Vagina (tissue), 2 donors: ENCODE measurements at regions of chr17 and their contacts with region 1.

Region 1: GRCh38 chr17:69460963-69461922 is 46.7 kb downstream of the MAP2K6 start:
- DNase-seq: no peak
- H3K4me3 ChIP-seq: no peak overlapping the region
- H3K27ac ChIP-seq: no peak overlapping the region
- H3K4me1 ChIP-seq: no peaks in the 10 kb centered on the region
- H3K27me3 ChIP-seq: no peaks in the 10 kb centered on the region
- CTCF ChIP-seq: no peak
- POLR2A ChIP-seq: no peak

Region 2: DNA sequence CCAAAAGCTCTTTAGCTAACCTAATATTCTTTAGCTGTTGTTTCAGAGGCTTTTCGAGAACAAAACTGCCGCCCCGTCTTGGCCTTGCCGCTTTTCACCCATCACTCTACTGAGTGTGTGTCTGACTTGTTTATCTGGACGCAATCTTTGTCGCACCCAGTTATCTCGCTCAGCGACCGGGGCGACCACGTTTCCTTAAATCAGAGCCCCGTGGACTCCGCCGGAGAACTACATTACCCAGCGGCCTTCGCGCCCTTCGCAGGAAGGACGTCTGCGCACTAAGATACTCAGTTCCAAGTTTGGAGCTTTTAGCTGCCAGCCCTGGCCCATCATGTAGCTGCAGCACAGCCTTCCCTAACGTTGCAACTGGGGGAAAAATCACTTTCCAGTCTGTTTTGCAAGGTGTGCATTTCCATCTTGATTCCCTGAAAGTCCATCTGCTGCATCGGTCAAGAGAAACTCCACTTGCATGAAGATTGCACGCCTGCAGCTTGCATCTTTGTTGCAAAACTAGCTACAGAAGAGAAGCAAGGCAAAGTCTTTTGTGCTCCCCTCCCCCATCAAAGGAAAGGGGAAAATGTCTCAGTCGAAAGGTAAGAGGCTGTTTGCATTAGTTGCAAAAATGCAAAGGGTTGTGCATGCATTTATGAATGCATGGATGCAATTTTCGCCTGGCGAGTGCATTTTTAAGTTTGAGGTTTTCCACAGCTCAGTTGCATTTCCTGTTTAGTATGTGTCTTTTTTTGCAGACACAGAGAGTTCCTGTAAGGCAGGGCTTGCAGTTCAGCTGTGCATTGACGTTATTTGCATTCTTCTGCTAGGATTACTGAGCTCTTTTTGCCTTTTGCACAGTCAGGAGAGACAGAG is 46.6 kb before region 1 on chr17 and contains the start of gene MAP2K6:
- intact Hi-C with region 1: no loop called
- DNase-seq: no peak
- H3K4me3 ChIP-seq: peak within 1 kb of the TSS; percentile 48 to 53
- H3K27ac ChIP-seq: peak within 1 kb of the TSS; percentile 54
- H3K4me1 ChIP-seq: peaks cover 30% of the 10 kb centered on the region
- H3K27me3 ChIP-seq: no peaks in the 10 kb centered on the region
- CTCF ChIP-seq: no peak
- POLR2A ChIP-seq: no peak
- total RNA-seq, gene MAP2K6: 10.3 TPM

Region 3: GRCh38 chr17:69525920-69526841 is 64.9 kb after region 1 on chr17:
- intact Hi-C with region 1: no loop called
- DNase-seq: no peak
- H3K4me3 ChIP-seq: no peak overlapping the region
- H3K27ac ChIP-seq: no peak overlapping the region
- H3K4me1 ChIP-seq: no peaks in the 10 kb centered on the region
- H3K27me3 ChIP-seq: no peaks in the 10 kb centered on the region
- CTCF ChIP-seq: peak; percentile 38 to 73 (median 64)
- POLR2A ChIP-seq: no peak

Region 4: DNA sequence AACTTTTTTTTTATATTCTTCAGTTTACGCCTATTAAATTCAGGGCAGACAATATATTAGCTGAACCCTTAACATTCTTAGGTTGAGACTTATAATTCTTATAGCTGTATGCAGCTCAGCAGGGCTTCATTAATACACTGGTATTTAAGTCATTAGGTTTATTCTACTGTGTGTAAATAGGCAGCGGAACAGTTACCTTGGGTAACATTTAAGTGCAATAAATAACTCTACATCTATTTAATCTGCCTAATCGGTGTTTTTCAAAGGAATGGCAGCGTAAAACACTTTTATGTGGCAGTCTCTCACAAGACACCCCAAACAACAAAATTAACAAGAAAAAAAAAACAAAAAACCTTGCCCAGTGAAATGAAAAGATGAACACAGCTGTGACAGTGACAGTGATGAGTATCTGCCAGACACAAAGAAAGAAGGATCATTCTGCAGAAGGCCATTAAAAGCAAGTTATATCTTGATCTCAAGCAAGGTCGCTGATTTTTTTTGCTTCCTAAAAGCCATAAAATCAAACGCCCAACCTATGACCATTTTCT is 740.7 kb after region 1 on chr17:
- intact Hi-C with region 1: no loop called
- DNase-seq: no peak
- H3K4me3 ChIP-seq: no peak overlapping the region
- H3K27ac ChIP-seq: no peak overlapping the region
- H3K4me1 ChIP-seq: peaks cover 8% of the 10 kb centered on the region
- H3K27me3 ChIP-seq: no peaks in the 10 kb centered on the region
- CTCF ChIP-seq: no peak
- POLR2A ChIP-seq: no peak

Region 5: GRCh38 chr17:70905796-70906195 is 1444.6 kb after region 1 on chr17:
- intact Hi-C with region 1: loop called (anchors 5 kb)
- DNase-seq: no peak
- H3K4me3 ChIP-seq: no peak overlapping the region
- H3K27ac ChIP-seq: no peak overlapping the region
- H3K4me1 ChIP-seq: no peaks in the 10 kb centered on the region
- H3K27me3 ChIP-seq: no peaks in the 10 kb centered on the region
- CTCF ChIP-seq: no peak
- POLR2A ChIP-seq: no peak